Posterior cingulate gyrus (tissue), 11 donors: ENCODE measurements at regions of chr1 and their contacts with region 1.

Region 1: DNA sequence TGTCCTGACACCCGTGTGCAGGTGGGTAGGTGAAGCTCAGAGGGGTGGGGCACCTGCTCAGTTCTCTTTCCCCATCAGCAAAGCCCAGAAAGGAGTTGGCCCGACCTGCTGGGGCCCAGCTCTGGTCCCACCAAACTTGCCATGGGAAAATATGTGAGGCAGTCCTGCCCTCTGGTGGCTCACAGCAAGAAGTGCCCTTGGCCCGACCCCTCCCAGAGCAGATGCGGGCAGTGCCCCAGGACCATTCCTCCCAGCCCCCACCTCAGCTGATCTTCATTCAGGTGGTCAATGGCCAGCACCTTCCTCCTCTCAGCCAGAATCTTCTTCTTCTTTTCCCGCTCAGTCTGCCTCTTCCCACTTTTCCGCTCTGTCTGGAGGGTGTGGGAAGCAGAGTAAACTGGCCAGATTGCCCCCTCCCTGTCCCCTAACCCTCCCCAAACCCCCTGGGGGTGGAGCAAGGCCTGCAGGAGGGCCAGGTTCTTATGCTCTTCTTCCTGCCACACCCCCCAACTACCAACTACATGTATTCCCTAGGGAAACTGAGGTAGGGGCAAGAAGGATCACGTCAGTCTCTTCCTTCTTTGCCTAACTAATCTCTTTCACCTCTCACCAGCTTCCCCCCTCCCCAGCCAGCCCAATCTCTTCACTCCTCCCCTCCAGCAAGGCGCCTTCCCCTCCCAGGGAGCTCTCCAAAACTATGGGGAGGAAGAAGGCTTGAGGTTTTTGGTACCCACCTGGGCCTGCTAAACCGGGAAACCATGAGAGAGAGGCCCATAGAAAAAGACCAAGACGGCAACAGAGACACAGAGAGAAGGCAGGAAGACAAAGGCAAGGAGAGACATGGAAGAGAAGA is 15.6 kb downstream of the TNNT2 start:
- DNase-seq: peak in 7 of 10 donors; percentile 28 to 92 (median 41)

Region 2: GRCh38 chr1:201254625-201255506 is 107.0 kb before region 1 on chr1:
- intact Hi-C with region 1: loop called (anchors 1 kb)
- DNase-seq: peak in 8 of 10 donors; percentile 51 to 95 (median 82)

Region 3: GRCh38 chr1:201381112-201381511 is 19.2 kb after region 1 on chr1:
- intact Hi-C with region 1: loop called (anchors 2 kb)
- DNase-seq: peak in 1 of 10 donors; percentile 71

Region 4: GRCh38 chr1:201399352-201400126 is 37.7 kb after region 1 on chr1:
- intact Hi-C with region 1: loop called (anchors 2 kb)
- DNase-seq: peak in 4 of 10 donors; percentile 20 to 77 (median 54)